ENCODE measurements at regions of chr19 and their contacts with region 1.

Region 1: DNA sequence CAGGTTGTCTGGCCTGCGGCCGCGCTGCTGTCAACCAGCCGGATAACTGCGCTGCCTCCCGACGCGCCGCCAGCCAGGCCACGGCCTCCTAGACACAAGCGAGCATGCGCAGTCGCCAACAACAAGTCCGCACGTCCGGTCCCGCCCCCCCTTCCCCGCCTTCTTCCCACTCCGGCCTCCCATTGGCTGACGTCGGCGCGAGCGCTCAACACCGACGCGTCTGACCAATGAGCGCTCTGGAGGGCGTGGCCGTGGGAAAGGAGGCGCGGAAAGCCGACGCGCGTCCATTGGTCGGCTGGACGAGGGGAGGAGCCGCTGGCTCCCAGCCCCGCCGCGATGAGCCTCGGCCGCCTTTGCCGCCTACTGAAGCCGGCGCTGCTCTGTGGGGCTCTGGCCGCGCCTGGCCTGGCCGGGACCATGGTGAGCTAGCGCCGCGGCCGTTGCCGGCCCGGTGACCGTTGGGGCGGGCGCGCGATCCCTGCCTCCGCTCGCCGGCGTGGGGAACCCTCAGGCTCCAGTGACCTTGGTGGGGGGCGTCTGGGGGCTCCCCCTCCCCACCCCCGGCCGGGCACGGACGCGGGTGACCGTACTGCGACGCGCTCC is at the start of gene GPX4:
- DNase-seq: peak; percentile 99
- H3K4me3 ChIP-seq: peak within 1 kb of the TSS; percentile 33 to 58 (median 52)
- H3K27ac ChIP-seq: peak within 1 kb of the TSS; percentile 93
- H3K4me1 ChIP-seq: peaks cover 31% of the 10 kb centered on the region
- H3K27me3 ChIP-seq: no peaks in the 10 kb centered on the region
- CTCF ChIP-seq: no peak
- POLR2A ChIP-seq: peak; percentile 99
- total RNA-seq, gene GPX4: 445 and 469 TPM in 2 replicates

Region 2: DNA sequence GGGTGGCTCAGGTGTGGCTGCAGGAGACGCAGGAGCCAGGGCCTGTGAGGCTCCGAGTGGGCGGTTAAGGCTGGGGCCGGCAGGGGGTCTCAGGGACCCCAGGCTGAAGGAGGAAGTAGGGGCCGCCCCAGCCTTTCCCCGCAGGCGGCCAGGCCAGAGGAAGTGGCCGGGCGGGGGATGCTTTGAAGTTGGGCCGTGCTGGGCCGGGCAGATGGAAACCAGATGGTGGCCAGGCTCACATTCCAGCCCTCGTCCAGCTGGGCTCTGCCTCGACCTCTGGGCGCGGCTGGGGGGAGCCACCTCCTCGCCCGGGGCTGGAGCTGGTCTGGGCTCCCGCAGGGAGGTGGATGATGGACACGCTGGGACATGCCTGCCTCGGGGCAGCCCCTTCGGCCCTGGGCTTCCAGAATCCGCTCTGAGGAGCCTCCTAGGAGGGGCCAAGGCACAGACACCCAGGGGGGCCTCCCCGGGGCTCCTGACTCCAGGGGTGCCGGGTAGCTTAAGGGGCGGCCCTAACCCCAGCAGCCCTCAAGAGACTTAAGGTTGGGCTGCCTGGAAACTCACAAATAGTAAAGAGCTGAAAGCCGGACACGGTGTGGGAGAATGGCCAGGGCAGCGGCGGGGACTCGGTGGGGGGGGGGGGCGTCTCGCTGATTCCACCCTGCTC is 170.5 kb before region 1 on chr19:
- CTCF ChIA-PET with region 1: no interaction called
- POLR2A ChIA-PET with region 1: no interaction called
- dilution Hi-C with region 1: no loop called
- intact Hi-C with region 1: loop called (anchors 10 kb)
- DNase-seq: no peak
- H3K4me3 ChIP-seq: no peak overlapping the region
- H3K27ac ChIP-seq: no peak overlapping the region
- H3K4me1 ChIP-seq: peaks cover 15% of the 10 kb centered on the region
- H3K27me3 ChIP-seq: no peaks in the 10 kb centered on the region
- CTCF ChIP-seq: no peak
- POLR2A ChIP-seq: no peak

Region 3: GRCh38 chr19:1205114-1206062 is 101.6 kb after region 1 on chr19 and contains the start of gene STK11:
- CTCF ChIA-PET with region 1: no interaction called
- POLR2A ChIA-PET with region 1: no interaction called
- dilution Hi-C with region 1: no loop called
- intact Hi-C with region 1: loop called (anchors 1 kb)
- DNase-seq: peak; percentile 97
- H3K4me3 ChIP-seq: peak within 1 kb of the TSS; percentile 76 to 88 (median 86)
- H3K27ac ChIP-seq: peak within 1 kb of the TSS; percentile 35
- H3K4me1 ChIP-seq: peaks cover 22% of the 10 kb centered on the region
- H3K27me3 ChIP-seq: no peaks in the 10 kb centered on the region
- CTCF ChIP-seq: no peak
- POLR2A ChIP-seq: peak; percentile 64
- total RNA-seq, gene STK11: 67.1 and 75.4 TPM in 2 replicates